CD4-positive, alpha-beta T cell (primary cell): ENCODE measurements at regions of chr13 and their contacts with region 1.

Region 1: GRCh38 chr13:98890186-98890585 is 87.7 kb downstream of the DOCK9 start:
- DNase-seq: no peak
- ATAC-seq: no peak
- H3K4me3 ChIP-seq: no peak overlapping the region
- H3K4me3 Mint-ChIP-seq: no peak overlapping the region
- H3K27ac ChIP-seq: no peak overlapping the region
- H3K27ac Mint-ChIP-seq: no peak overlapping the region
- H3K4me1 ChIP-seq: no peaks in the 10 kb centered on the region
- H3K4me1 Mint-ChIP-seq: no peaks in the 10 kb centered on the region
- H3K27me3 ChIP-seq: no peaks in the 10 kb centered on the region
- H3K27me3 Mint-ChIP-seq: no peaks in the 10 kb centered on the region
- CTCF ChIP-seq: no peak

Region 2: GRCh38 chr13:99075268-99076191 is 185.3 kb after region 1 on chr13:
- CTCF ChIA-PET with region 1: no interaction called
- POLR2A ChIA-PET with region 1: no interaction called
- intact Hi-C with region 1: loop called in 1 of 2 experiments (anchors 5 kb)
- DNase-seq: peak in 3 of 14 experiments; percentile 58 to 81 (median 62)
- ATAC-seq: peak; percentile 76
- H3K4me3 ChIP-seq: peak overlapping the region; percentile 24
- H3K4me3 Mint-ChIP-seq: peak overlapping the region; percentile 18
- H3K27ac ChIP-seq: peak overlapping the region; percentile 37 to 61
- H3K27ac Mint-ChIP-seq: peak overlapping the region; percentile 84
- H3K4me1 ChIP-seq: peaks cover 45% of the 10 kb centered on the region
- H3K4me1 Mint-ChIP-seq: peaks cover 92% of the 10 kb centered on the region
- H3K27me3 ChIP-seq: no peaks in the 10 kb centered on the region
- H3K27me3 Mint-ChIP-seq: no peaks in the 10 kb centered on the region
- CTCF ChIP-seq: no peak